ENCODE measurements at regions of chr9 and their contacts with region 1.

Region 1: GRCh38 chr9:19155106-19155935 is 28.0 kb upstream of the PLIN2 start:
- DNase-seq: no peak
- ATAC-seq: no peak
- H3K4me3 ChIP-seq: no peak overlapping the region
- H3K4me3 Mint-ChIP-seq: no peak overlapping the region
- H3K27ac ChIP-seq: no peak overlapping the region
- H3K27ac Mint-ChIP-seq: peak overlapping the region; percentile 5 to 29
- H3K4me1 ChIP-seq: peaks cover 0 to 3% of the 10 kb centered on the region in 2 experiments
- H3K4me1 Mint-ChIP-seq: peaks cover 12 to 24% (median 14%) of the 10 kb centered on the region in 3 donors
- H3K27me3 ChIP-seq: no peaks in the 10 kb centered on the region
- H3K27me3 Mint-ChIP-seq: no peaks in the 10 kb centered on the region

Region 2: GRCh38 chr9:19230356-19231125 is 75.2 kb after region 1 on chr9 and contains the start of gene DENND4C:
- CTCF ChIA-PET with region 1: interaction called in 1 of 2 experiments, 10 read pairs
- POLR2A ChIA-PET with region 1: no interaction called
- DNase-seq: peak; percentile 62 to 87 (median 75)
- ATAC-seq: peak; percentile 86 to 90 (median 88)
- H3K4me3 ChIP-seq: peak within 1 kb of the TSS; percentile 86 to 87
- H3K4me3 Mint-ChIP-seq: peak within 1 kb of the TSS in 2 of 3 donors; percentile 68 to 78
- H3K27ac ChIP-seq: peak within 1 kb of the TSS; percentile 79
- H3K27ac Mint-ChIP-seq: peak within 1 kb of the TSS; percentile 89 to 90
- H3K4me1 ChIP-seq: peaks cover 9 to 21% of the 10 kb centered on the region in 2 experiments
- H3K4me1 Mint-ChIP-seq: peaks cover 13 to 19% (median 17%) of the 10 kb centered on the region in 3 donors
- H3K27me3 ChIP-seq: no peaks in the 10 kb centered on the region
- H3K27me3 Mint-ChIP-seq: no peaks in the 10 kb centered on the region
- total RNA-seq, gene DENND4C: 49.6 to 55.7 (median 53.3) TPM

Measured in T-cell (primary cell).